ENCODE measurements at regions of chr5 and their contacts with region 1.

Region 1: GRCh38 chr5:178551059-178551458 is 39.1 kb downstream of the COL23A1 start:
- DNase-seq: no peak
- ATAC-seq: peak; percentile 72 to 83
- H3K4me3 ChIP-seq: no peak overlapping the region
- H3K27ac ChIP-seq: no peak overlapping the region
- H3K4me1 ChIP-seq: peaks cover 6 to 14% of the 10 kb centered on the region in 2 donors
- H3K27me3 ChIP-seq: no peaks in the 10 kb centered on the region
- CTCF ChIP-seq: peak in 3 of 5 experiments; percentile 29 to 64 (median 52)
- POLR2A ChIP-seq: no peak

Region 2: GRCh38 chr5:178324481-178325310 is 226.4 kb before region 1 on chr5:
- in situ Hi-C with region 1: no loop called
- intact Hi-C with region 1: loop called (anchors 5 kb)
- DNase-seq: no peak
- ATAC-seq: no peak
- H3K4me3 ChIP-seq: no peak overlapping the region
- H3K27ac ChIP-seq: peak overlapping the region in 1 of 4 donors; percentile 63
- H3K4me1 ChIP-seq: peaks cover 4 to 5% of the 10 kb centered on the region in 2 donors
- H3K27me3 ChIP-seq: no peaks in the 10 kb centered on the region
- CTCF ChIP-seq: no peak
- POLR2A ChIP-seq: no peak

Region 3: DNA sequence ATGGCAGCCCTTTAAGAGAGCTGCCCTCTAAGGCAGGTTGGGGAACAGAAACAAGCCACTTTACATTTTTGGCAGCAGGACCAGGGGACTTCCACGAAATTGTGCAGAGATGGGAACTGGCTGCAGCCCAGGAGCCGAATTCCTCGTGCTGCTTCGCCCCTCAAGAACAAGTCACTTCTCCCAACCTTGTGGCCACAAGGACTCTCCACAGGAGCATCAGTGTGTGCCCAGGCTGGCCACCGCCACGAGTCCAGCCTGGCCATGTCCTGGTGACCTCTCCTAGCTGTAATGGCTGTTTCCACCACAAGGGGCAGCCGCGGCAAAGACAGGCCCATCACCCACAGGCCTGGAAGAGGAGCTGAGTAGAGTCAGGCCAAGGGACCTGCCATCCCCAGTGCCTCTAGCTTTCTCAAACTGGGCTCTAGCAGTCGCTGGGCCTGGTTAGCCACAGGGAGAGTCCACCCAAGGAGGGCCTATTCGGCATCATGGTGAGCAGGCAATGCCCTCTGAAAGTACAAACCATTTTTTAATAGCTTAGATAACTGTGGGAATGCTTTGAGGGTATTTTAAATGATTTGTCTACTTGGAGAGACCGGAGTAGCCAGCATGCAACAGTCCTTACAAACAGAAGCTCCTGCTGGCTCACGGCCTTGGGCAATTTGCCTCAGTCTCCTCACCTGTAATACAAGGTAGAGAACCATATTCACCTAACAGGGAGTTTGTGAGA is 89.9 kb before region 1 on chr5:
- in situ Hi-C with region 1: no loop called
- intact Hi-C with region 1: loop called (anchors 1 kb)
- DNase-seq: peak; percentile 49 to 74
- ATAC-seq: peak; percentile 97 to 100
- H3K4me3 ChIP-seq: no peak overlapping the region
- H3K27ac ChIP-seq: no peak overlapping the region
- H3K4me1 ChIP-seq: peaks cover 0 to 3% of the 10 kb centered on the region in 2 donors
- H3K27me3 ChIP-seq: no peaks in the 10 kb centered on the region
- CTCF ChIP-seq: peak; percentile 69 to 88 (median 80)
- POLR2A ChIP-seq: no peak

Region 4: DNA sequence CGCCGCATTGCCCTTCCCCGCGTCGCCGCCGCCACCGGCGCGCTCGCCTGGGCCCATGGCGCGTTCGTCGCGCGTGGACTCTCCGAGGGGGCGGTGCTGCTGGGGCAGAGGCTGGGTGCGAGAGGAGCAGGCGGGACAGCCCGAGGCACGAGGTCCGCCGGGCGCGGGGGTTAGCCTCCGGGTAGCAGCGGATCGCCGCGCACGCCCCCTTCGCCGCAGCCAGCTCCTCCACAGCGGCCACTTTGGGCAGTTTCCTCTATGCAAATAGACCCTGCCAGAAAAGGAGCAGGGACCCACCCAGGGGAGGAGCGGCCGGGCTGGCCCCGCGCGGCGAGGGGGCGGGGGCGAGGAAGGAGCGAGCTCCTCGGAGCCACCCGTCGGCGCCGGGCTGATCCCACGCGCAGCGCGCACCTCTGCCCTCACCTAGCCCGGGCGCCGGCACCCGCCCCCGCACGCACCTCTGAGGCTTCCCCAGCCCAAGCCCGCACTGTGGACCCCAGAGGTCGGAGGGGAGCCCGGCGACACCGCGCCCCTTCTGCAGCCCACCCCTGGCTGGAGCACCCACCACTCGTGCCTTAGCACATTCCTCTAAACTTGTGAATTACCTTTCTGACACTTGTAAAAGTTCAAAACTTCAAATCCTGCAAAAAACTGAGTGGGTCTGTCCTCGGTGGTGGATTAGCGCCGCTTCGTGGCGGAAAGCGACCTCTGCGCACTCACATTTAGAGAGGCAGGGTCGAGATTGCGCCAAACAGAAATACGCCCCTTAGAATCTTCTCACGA is 39.3 kb after region 1 on chr5 and contains the start of gene COL23A1:
- in situ Hi-C with region 1: no loop called
- intact Hi-C with region 1: loop called (anchors 1 kb)
- DNase-seq: peak; percentile 43 to 53
- ATAC-seq: peak; percentile 65
- H3K4me3 ChIP-seq: peak within 1 kb of the TSS; percentile 53 to 65 (median 58)
- H3K27ac ChIP-seq: peak within 1 kb of the TSS; percentile 70 to 86 (median 78)
- H3K4me1 ChIP-seq: peaks cover 9 to 23% of the 10 kb centered on the region in 2 donors
- H3K27me3 ChIP-seq: peaks cover 0 to 2% (median 0%) of the 10 kb centered on the region in 3 donors
- CTCF ChIP-seq: peak; percentile 42 to 73 (median 64)
- POLR2A ChIP-seq: peak; percentile 16 to 18
- total RNA-seq, gene COL23A1: 0.62 to 1.1 (median 0.97) TPM in 3 of 4 donors, not detected in the other

Measured in gastrocnemius medialis (tissue), 4 donors.